Natural killer cell (primary cell): ENCODE measurements at regions of chr7 and their contacts with region 1.

Region 1: GRCh38 chr7:131107337-131108211 is 220.1 kb upstream of the MKLN1 start:
- DNase-seq: peak; percentile 68 to 91
- ATAC-seq: peak; percentile 10 to 51 (median 35)
- H3K4me3 ChIP-seq: peak overlapping the region; percentile 95
- H3K4me3 Mint-ChIP-seq: peak overlapping the region; percentile 85
- H3K27ac ChIP-seq: peak overlapping the region; percentile 93
- H3K27ac Mint-ChIP-seq: peak overlapping the region; percentile 98 to 99
- H3K4me1 ChIP-seq: peaks cover 35% of the 10 kb centered on the region
- H3K4me1 Mint-ChIP-seq: peaks cover 69 to 75% of the 10 kb centered on the region in 2 donors
- H3K27me3 ChIP-seq: no peaks in the 10 kb centered on the region
- H3K27me3 Mint-ChIP-seq: no peaks in the 10 kb centered on the region
- CTCF ChIP-seq: no peak

Region 2: DNA sequence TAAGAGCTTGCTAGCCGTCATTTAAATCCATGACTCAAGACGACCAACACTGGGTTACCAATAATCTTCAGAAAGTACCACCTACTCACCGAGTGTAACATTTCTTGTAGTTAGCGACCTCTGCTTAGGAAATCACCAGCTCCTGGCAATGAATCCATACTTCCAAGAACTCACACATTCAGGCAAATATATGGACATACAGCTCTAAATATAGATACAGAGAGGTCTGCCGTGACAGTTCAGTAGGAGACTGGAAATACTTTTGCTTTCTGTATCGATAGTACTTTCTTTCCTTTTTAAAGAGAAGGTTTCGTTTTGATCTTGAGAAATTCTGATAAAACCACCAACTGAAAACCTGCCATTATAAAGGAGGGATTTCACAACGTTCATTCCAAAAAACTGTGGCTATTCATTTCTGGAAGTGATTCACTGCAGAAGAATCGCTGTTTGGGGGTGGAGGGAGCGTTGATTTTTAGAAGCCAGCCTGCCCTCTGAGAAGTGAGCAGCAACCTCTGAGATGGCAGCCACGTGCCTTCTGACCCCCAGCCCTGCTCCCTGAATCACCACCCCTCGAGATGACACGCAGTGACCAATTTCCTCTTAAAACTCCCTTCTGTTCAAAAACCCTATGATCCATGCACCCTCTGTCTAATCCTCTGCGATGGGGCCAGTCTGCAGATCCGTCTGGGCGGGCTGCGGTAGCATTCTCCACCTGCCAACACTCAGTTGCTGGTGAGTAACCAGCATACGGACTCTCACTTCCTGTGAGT is 194.5 kb before region 1 on chr7:
- intact Hi-C with region 1: loop called (anchors 1 kb)
- DNase-seq: peak; percentile 76 to 92
- ATAC-seq: peak; percentile 79 to 92 (median 90)
- H3K4me3 ChIP-seq: peak overlapping the region; percentile 59
- H3K4me3 Mint-ChIP-seq: peak overlapping the region; percentile 92
- H3K27ac ChIP-seq: peak overlapping the region; percentile 97
- H3K27ac Mint-ChIP-seq: peak overlapping the region; percentile 92 to 93
- H3K4me1 ChIP-seq: peaks cover 52% of the 10 kb centered on the region
- H3K4me1 Mint-ChIP-seq: peaks cover 82 to 83% of the 10 kb centered on the region in 2 donors
- H3K27me3 ChIP-seq: no peaks in the 10 kb centered on the region
- H3K27me3 Mint-ChIP-seq: no peaks in the 10 kb centered on the region
- CTCF ChIP-seq: no peak

Region 3: DNA sequence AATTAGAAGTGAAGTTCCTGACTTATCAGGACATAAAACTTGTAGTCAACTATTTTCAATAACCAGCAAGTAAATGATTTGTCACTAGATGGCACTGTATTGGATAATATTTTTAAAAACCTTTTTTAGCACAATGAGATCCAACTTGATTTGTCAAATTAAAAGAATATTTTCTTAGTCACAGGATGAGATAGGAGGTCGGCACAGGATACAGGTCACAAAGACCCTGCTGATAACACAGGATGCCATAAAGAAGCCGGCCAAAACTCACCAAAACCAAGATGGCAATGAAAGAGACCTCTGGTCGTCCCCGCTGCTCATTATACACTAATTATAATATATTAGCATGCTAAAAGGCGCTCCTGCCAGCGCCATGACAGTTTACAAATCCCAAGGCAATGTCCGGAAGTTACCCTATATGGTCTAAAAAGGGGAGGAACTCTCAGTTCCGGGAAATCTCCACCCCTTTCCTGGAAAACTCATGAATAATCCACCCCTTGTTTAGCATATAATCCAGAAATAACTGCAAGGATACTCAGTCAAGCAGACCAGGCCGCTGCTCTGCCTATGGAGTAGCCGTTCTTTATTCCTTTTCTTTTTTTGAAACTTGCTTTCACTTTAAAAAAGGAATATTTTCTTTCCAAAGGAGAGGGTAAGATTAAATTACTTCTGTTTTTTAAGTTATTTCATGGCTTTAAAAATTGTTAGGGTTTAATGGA is 35.6 kb before region 1 on chr7:
- intact Hi-C with region 1: loop called (anchors 5 kb)
- DNase-seq: no peak
- ATAC-seq: no peak
- H3K4me3 ChIP-seq: no peak overlapping the region
- H3K4me3 Mint-ChIP-seq: peak overlapping the region; percentile 53
- H3K27ac ChIP-seq: no peak overlapping the region
- H3K27ac Mint-ChIP-seq: no peak overlapping the region
- H3K4me1 ChIP-seq: peaks cover 19% of the 10 kb centered on the region
- H3K4me1 Mint-ChIP-seq: peaks cover 26 to 78% of the 10 kb centered on the region in 2 donors
- H3K27me3 ChIP-seq: no peaks in the 10 kb centered on the region
- H3K27me3 Mint-ChIP-seq: no peaks in the 10 kb centered on the region
- CTCF ChIP-seq: peak; percentile 47

Region 4: GRCh38 chr7:131235489-131236317 is 128.1 kb after region 1 on chr7:
- intact Hi-C with region 1: loop called (anchors 1 kb)
- DNase-seq: peak; percentile 64 to 90
- ATAC-seq: peak; percentile 63 to 81 (median 77)
- H3K4me3 ChIP-seq: no peak overlapping the region
- H3K4me3 Mint-ChIP-seq: peak overlapping the region; percentile 65
- H3K27ac ChIP-seq: peak overlapping the region; percentile 59
- H3K27ac Mint-ChIP-seq: peak overlapping the region; percentile 91 to 97
- H3K4me1 ChIP-seq: peaks cover 26% of the 10 kb centered on the region
- H3K4me1 Mint-ChIP-seq: peaks cover 53 to 57% of the 10 kb centered on the region in 2 donors
- H3K27me3 ChIP-seq: no peaks in the 10 kb centered on the region
- H3K27me3 Mint-ChIP-seq: no peaks in the 10 kb centered on the region
- CTCF ChIP-seq: no peak

Region 5: GRCh38 chr7:131424219-131424822 is 316.7 kb after region 1 on chr7:
- intact Hi-C with region 1: loop called (anchors 5 kb)
- DNase-seq: peak in 1 of 2 donors; percentile 66
- ATAC-seq: peak; percentile 75 to 90 (median 76)
- H3K4me3 ChIP-seq: no peak overlapping the region
- H3K4me3 Mint-ChIP-seq: no peak overlapping the region
- H3K27ac ChIP-seq: no peak overlapping the region
- H3K27ac Mint-ChIP-seq: no peak overlapping the region
- H3K4me1 ChIP-seq: no peaks in the 10 kb centered on the region
- H3K4me1 Mint-ChIP-seq: peaks cover 6% of the 10 kb centered on the region in 2 donors
- H3K27me3 ChIP-seq: no peaks in the 10 kb centered on the region
- H3K27me3 Mint-ChIP-seq: no peaks in the 10 kb centered on the region
- CTCF ChIP-seq: peak; percentile 61